Activated naive CD4-positive, alpha-beta T cell treated with anti-CD3 and anti-CD28 coated beads for 36 hours (primary cell): ENCODE measurements at regions of chr1 and their contacts with region 1.

Region 1: GRCh38 chr1:235011599-235012435 is 116.8 kb downstream of the TOMM20 start:
- DNase-seq: peak; percentile 99
- H3K4me3 Mint-ChIP-seq: peak overlapping the region; percentile 56
- H3K27ac Mint-ChIP-seq: peak overlapping the region; percentile 94
- H3K4me1 Mint-ChIP-seq: peaks cover 89% of the 10 kb centered on the region
- H3K27me3 Mint-ChIP-seq: no peaks in the 10 kb centered on the region

Region 2: GRCh38 chr1:233304489-233305102 is 1707.2 kb before region 1 on chr1:
- CTCF ChIA-PET with region 1: no interaction called
- intact Hi-C with region 1: no loop called
- DNase-seq: no peak
- H3K4me3 Mint-ChIP-seq: no peak overlapping the region
- H3K27ac Mint-ChIP-seq: no peak overlapping the region
- H3K4me1 Mint-ChIP-seq: no peaks in the 10 kb centered on the region
- H3K27me3 Mint-ChIP-seq: peaks cover 4% of the 10 kb centered on the region

Region 3: DNA sequence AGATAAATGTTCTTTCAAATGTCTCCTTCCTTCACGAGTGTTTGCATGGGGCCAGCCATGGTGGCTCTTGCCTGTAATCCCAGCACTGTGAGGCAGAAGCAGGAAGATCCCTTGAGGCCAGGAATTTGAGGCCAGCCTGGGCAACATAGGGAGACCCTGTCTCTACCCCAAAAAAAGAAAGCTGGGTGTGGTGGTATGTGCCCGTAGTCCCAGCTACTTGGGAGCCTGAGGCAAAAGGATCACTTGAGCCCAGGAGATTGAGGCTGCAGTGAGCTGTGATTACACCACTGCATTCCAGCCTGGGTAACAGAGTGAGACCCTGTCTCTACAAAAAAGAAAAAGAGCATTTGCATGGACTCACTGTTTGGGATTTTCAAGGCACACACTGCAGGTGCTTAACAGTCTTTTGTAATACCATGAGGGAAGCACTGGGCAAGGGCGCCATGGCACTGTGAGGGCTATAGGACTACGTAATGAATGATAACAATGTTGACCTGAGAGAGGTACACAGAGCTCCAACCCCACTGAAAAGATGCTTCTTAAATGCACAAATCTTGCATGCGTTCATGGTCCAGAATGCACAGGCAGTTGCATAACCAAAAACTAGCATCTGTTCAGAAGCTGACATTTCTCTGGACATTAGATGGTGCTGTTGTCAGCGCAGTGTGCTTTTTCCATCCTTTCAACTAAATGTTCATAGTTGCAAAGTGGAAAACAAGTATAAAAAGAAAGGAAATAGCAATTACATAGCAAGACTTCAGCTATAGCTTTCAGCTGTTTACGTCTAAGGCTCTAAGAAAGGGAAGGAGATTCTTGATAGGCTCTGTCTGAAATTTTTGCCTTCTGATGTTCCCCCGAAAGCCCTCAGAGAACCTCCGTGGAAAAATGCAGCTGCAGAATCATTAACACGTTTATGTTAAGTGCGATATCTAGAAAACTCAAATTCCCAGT is 525.0 kb before region 1 on chr1:
- CTCF ChIA-PET with region 1: interaction called, 3 read pairs
- intact Hi-C with region 1: loop called (anchors 1 kb)
- DNase-seq: peak; percentile 66
- H3K4me3 Mint-ChIP-seq: no peak overlapping the region
- H3K27ac Mint-ChIP-seq: peak overlapping the region; percentile 91
- H3K4me1 Mint-ChIP-seq: peaks cover 41% of the 10 kb centered on the region
- H3K27me3 Mint-ChIP-seq: peaks cover 12% of the 10 kb centered on the region

Region 4: DNA sequence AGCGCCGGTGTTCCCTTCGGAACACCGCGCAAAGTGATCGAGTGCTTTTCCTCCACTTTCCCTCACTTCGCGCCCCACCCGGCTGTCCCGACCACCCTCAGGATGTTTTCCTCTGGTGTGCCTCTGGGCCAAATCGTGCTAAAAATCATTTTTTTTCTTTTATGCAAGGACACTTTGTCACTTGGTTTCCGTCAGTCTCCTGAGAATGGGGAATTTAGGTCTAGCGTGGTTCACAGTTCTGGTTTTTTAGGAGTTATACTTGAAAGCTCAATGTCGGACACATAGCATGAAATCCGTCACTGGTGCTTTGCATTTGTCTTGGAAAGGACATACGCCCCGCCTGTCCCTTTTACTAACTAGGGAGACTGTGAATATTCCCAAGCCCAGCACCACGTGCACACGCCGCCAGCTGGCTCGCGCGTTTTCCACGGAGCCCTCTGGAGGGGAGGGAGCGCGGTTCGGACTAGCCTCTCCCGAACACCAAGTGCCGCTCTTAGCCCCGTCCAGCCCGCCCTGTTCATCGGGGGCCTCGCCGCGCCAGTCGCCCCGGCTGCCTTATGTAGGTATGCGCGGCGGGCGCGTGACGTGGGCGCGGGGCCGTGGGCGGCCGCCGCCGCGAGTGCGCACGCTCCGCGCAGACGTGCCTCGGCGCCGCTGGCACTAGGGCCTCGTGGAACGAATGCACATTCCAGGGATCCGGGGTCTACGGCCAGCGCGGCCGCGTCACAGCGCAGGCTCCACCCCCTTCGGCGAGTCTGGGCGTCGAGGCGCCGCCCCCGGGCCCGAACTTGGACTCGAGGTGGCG is 401.3 kb before region 1 on chr1:
- CTCF ChIA-PET with region 1: interaction called, 3 read pairs
- intact Hi-C with region 1: loop called (anchors 1 kb)
- DNase-seq: peak; percentile 91
- H3K4me3 Mint-ChIP-seq: peak overlapping the region; percentile 84
- H3K27ac Mint-ChIP-seq: peak overlapping the region; percentile 96
- H3K4me1 Mint-ChIP-seq: peaks cover 33% of the 10 kb centered on the region
- H3K27me3 Mint-ChIP-seq: no peaks in the 10 kb centered on the region

Region 5: GRCh38 chr1:234709473-234710228 is 302.2 kb before region 1 on chr1:
- CTCF ChIA-PET with region 1: no interaction called
- intact Hi-C with region 1: no loop called
- DNase-seq: no peak
- H3K4me3 Mint-ChIP-seq: no peak overlapping the region
- H3K27ac Mint-ChIP-seq: no peak overlapping the region
- H3K4me1 Mint-ChIP-seq: peaks cover 12% of the 10 kb centered on the region
- H3K27me3 Mint-ChIP-seq: no peaks in the 10 kb centered on the region

Region 6: DNA sequence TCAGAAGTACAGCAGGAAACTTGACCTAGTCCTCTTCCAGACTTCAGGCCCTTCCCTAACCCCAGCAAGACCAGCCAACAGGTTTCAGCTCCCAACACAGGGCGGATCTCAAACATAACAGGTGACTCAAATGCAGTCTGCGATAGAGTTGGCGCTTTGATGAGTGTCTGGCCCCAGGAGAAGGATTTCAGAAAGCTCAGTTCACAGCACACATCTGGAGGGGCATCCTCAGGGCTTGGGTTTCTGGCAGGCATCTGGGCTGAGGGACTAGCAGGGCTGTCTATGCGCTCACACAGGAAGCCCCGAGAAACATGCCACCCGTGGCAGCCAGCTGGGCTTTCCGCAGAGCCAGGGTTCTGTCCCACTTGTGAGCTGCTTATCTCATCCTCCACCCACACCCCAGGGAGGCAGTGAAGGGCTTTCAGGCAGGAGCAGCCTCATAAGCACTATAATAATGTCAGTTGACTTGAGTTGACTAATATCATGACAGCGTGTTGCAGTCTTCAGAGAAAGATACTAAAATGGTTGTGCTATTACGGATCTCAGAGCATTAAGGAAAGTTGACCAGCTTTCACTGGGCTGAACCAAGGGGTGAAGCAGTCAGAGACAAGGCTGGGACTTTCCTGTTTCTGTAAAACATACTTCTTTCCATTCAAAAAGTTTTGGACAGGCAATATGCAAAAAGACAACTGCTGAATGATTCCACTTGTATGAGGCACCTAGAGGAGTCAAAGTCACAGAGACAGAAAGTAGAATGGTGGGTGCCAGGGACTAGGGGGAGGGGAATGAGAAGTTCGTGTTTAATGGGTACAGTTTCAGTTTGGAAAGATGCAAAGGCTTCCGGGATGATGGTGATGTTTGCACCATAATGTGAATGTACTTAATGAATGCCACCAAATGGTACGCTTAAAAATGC is 168.8 kb before region 1 on chr1:
- CTCF ChIA-PET with region 1: interaction called, 8 read pairs
- intact Hi-C with region 1: loop called (anchors 1 kb)
- DNase-seq: peak; percentile 95
- H3K4me3 Mint-ChIP-seq: peak overlapping the region; percentile 62
- H3K27ac Mint-ChIP-seq: peak overlapping the region; percentile 96
- H3K4me1 Mint-ChIP-seq: peaks cover 85% of the 10 kb centered on the region
- H3K27me3 Mint-ChIP-seq: no peaks in the 10 kb centered on the region

Region 7: DNA sequence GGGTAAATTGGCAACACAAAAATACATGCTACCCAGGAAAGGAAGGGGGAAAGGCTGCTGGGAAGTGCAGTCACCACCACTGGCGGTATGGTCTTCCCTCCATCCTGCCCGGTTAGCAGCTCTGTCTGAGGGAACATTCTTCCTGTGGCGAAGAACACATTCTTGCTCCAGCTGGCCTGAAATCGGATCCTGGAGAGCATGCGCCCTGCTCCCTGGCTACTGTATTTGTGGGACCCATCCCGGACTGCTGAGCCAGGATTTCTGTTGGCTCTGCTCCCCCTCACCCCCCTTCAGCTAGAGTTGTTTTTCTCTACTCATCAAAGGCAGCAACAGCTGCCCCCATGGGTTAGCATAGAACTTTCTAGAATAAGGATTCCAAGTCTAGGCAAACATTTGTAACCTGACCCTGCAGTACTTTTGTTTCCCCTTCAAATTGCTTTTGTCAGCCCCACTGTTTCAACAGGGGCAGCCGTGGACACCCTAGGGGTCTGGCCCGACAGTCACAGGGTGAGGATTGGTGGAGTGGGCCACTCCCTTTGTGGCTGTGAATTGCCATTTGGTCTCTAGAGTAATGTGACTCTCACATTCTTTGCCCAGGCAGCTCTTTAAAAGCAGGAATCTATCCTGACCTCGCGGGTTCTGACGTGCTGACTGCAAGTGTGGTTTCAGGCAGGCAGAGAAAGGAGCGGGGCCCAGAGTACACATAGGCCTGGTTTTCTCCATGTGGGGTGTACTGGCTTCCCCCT is 40.9 kb before region 1 on chr1:
- CTCF ChIA-PET with region 1: interaction called, 3 read pairs
- intact Hi-C with region 1: loop called (anchors 2 kb)
- DNase-seq: peak; percentile 60
- H3K4me3 Mint-ChIP-seq: no peak overlapping the region
- H3K27ac Mint-ChIP-seq: peak overlapping the region; percentile 88
- H3K4me1 Mint-ChIP-seq: peaks cover 64% of the 10 kb centered on the region
- H3K27me3 Mint-ChIP-seq: no peaks in the 10 kb centered on the region

Region 8: GRCh38 chr1:235328357-235329138 is 316.7 kb after region 1 on chr1 and contains the start of gene GGPS1:
- CTCF ChIA-PET with region 1: no interaction called
- intact Hi-C with region 1: loop called (anchors 2 kb)
- DNase-seq: peak; percentile 99
- H3K4me3 Mint-ChIP-seq: no peak within 1 kb of the TSS
- H3K27ac Mint-ChIP-seq: peak within 1 kb of the TSS; percentile 94
- H3K4me1 Mint-ChIP-seq: peaks cover 31% of the 10 kb centered on the region
- H3K27me3 Mint-ChIP-seq: no peaks in the 10 kb centered on the region
- total RNA-seq, gene GGPS1: 35.3 to 36.9 TPM

Region 9: DNA sequence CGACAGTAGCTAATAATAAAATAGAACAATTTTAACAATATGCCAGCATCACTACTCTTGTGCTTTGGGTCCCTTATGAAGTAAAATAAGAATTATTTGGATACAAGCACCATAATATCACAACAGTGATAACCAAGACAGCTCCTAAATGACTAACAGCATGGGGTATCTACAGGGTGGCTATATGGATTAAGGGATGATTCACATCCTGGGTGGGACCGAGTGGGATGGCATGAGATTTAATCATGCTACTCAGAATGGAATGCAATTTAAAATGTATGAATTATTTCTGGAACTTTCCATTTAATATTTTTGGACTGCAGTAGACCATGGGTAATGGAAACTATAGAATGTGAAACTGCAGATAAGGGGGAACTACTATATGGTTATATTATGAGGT is 520.5 kb after region 1 on chr1:
- CTCF ChIA-PET with region 1: no interaction called
- intact Hi-C with region 1: no loop called
- DNase-seq: no peak
- H3K4me3 Mint-ChIP-seq: no peak overlapping the region
- H3K27ac Mint-ChIP-seq: no peak overlapping the region
- H3K4me1 Mint-ChIP-seq: no peaks in the 10 kb centered on the region
- H3K27me3 Mint-ChIP-seq: no peaks in the 10 kb centered on the region